Activated T-helper 1 cell treated with anti-CD3 and anti-CD28 coated beads, Interleukin-12 subunit alpha, Interleukin-12 subunit beta, Interleukin-2, Interleukin-4 antibody, amounts not matched to agents 30 ng/mL and 10 ng/mL and 1 ng/mL, durations not matched to agents 14 hours and 24 hours and 36 hours (primary cell): ENCODE measurements at regions of chr5 and their contacts with region 1.

Region 1: GRCh38 chr5:115487756-115488155 is 56.8 kb downstream of the FEM1C start:
- DNase-seq: no peak
- H3K4me3 Mint-ChIP-seq: peak overlapping the region; percentile 12
- H3K27ac Mint-ChIP-seq: peak overlapping the region; percentile 81
- H3K4me1 Mint-ChIP-seq: peaks cover 18% of the 10 kb centered on the region
- H3K27me3 Mint-ChIP-seq: peaks cover under 1% of the 10 kb centered on the region

Region 2: DNA sequence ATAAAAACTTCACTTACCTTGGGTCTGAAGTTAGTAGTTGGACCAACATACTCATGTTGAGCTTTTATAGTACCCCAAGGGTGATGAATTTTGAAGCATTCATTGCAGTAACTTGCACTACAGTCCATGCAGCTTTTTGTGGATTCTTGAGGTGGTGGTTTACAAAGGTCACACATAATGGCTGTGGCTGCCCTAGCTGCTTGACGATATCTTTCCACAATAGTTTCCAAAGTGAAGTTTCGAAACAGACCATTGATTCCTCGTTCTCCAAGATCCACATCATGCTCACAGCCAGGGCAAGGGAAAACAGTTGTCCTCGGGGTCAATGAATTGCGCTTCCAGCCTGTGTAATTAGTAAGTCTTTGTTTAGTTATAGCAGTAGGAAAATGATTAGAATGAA is 340.7 kb before region 1 on chr5:
- intact Hi-C with region 1: no loop called
- DNase-seq: no peak
- H3K4me3 Mint-ChIP-seq: no peak overlapping the region
- H3K27ac Mint-ChIP-seq: no peak overlapping the region
- H3K4me1 Mint-ChIP-seq: no peaks in the 10 kb centered on the region
- H3K27me3 Mint-ChIP-seq: peaks cover 5% of the 10 kb centered on the region

Region 3: DNA sequence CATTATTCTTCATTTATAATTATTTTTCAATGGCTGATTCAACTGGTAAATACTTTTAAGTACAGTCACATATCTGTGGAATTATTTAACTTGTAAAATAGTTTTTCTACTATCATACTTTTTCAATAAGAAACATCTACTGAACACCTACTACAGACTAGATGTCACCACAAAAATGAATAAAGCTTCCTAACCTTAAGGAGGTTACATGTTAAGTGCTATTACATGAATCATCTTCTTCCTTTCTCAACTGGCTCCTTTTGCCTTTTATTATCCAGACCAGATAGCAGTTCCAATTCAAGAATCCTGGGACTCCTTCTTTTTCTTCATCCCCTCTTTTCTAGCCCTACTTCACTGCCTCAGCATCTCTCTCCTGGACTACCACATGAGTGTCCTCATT is 229.8 kb before region 1 on chr5:
- intact Hi-C with region 1: no loop called
- DNase-seq: no peak
- H3K4me3 Mint-ChIP-seq: no peak overlapping the region
- H3K27ac Mint-ChIP-seq: no peak overlapping the region
- H3K4me1 Mint-ChIP-seq: peaks cover 38% of the 10 kb centered on the region
- H3K27me3 Mint-ChIP-seq: no peaks in the 10 kb centered on the region

Region 4: GRCh38 chr5:115415143-115415491 is 72.6 kb before region 1 on chr5:
- intact Hi-C with region 1: loop called (anchors 1 kb)
- DNase-seq: no peak
- H3K4me3 Mint-ChIP-seq: no peak overlapping the region
- H3K27ac Mint-ChIP-seq: no peak overlapping the region
- H3K4me1 Mint-ChIP-seq: no peaks in the 10 kb centered on the region
- H3K27me3 Mint-ChIP-seq: peaks cover 10% of the 10 kb centered on the region

Region 5: GRCh38 chr5:115450741-115451140 is 37.0 kb before region 1 on chr5:
- intact Hi-C with region 1: loop called (anchors 5 kb)
- DNase-seq: no peak
- H3K4me3 Mint-ChIP-seq: no peak overlapping the region
- H3K27ac Mint-ChIP-seq: no peak overlapping the region
- H3K4me1 Mint-ChIP-seq: peaks cover 12% of the 10 kb centered on the region
- H3K27me3 Mint-ChIP-seq: no peaks in the 10 kb centered on the region

Region 6: GRCh38 chr5:115460472-115460871 is 27.3 kb before region 1 on chr5:
- intact Hi-C with region 1: loop called (anchors 1 kb)
- DNase-seq: no peak
- H3K4me3 Mint-ChIP-seq: no peak overlapping the region
- H3K27ac Mint-ChIP-seq: no peak overlapping the region
- H3K4me1 Mint-ChIP-seq: peaks cover 4% of the 10 kb centered on the region
- H3K27me3 Mint-ChIP-seq: peaks cover 17% of the 10 kb centered on the region

Region 7: GRCh38 chr5:115522832-115523403 is 35.2 kb after region 1 on chr5:
- intact Hi-C with region 1: loop called (anchors 5 kb)
- DNase-seq: no peak
- H3K4me3 Mint-ChIP-seq: peak overlapping the region; percentile 23
- H3K27ac Mint-ChIP-seq: peak overlapping the region; percentile 70
- H3K4me1 Mint-ChIP-seq: peaks cover 22% of the 10 kb centered on the region
- H3K27me3 Mint-ChIP-seq: no peaks in the 10 kb centered on the region